GM18951 (cell line): ENCODE measurements at regions of chr5 and their contacts with region 1.

Region 1: DNA sequence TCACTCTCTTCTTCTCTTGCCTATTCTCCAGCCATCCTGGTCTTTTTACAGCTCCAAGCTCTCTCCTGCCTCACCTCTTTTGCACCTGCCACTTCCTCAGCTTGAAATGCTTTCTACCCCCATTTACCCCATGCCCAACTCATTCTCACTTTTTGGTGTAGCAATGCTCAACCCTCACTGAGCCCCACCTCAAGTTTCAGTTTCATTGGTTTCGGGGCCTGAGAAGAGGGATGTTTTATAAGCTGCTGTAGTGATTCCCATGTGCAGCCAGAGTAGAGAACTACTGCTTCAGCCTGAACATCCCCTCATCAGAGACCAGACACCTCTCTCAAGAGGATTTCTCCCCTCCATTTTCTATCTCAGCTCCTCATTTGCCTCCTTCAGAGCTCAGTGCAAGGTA is 45.2 kb upstream of the FYB1 start:
- POLR2A ChIP-seq: no peak

Region 2: DNA sequence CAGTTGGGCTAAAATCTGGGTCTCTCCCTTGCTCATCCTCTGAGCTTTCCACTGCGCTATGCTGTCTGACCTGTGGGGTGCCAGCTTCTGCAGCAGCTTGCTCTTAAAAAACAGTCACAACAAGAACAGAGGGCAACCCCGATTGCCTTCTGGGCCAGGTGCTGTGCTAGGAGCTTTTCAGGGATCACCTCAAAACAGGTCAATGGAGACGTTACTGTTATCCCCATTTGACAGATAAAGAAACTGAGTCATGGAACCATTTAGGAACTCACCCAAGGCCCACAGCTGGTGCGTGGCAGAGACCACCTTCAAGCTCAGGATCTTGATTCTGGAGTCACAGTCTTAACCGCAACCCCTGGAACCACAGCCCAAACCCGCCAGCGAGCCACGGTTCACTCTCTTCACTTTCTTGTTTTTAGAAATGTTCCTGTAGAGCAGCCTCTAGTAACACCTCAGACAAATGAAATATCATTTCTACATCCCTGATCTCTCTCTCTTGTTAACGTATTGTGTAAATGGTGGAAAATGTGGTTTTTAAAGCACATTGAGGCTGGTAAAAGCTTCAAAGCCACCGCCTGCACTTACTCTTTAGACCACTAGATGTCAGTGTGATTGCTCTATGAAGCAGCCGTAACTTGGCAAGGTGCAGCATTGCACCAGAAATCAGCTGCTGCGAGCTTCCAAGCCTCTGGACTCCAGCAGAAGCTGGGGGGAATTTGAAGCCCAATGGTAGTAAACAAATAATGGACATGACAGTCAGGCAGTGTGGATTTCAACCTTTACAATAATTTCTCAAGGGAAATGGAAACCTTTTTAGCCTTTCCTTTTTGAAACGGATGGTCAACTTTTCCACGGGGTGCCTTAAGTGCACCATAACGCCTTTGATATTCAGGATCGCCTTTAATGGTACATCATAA is 46.9 kb before region 1 on chr5:
- in situ Hi-C with region 1: loop called (anchors 10 kb)
- POLR2A ChIP-seq: no peak